OCI-LY7 (cell line): ENCODE measurements at regions of chr6 and their contacts with region 1.

Region 1: DNA sequence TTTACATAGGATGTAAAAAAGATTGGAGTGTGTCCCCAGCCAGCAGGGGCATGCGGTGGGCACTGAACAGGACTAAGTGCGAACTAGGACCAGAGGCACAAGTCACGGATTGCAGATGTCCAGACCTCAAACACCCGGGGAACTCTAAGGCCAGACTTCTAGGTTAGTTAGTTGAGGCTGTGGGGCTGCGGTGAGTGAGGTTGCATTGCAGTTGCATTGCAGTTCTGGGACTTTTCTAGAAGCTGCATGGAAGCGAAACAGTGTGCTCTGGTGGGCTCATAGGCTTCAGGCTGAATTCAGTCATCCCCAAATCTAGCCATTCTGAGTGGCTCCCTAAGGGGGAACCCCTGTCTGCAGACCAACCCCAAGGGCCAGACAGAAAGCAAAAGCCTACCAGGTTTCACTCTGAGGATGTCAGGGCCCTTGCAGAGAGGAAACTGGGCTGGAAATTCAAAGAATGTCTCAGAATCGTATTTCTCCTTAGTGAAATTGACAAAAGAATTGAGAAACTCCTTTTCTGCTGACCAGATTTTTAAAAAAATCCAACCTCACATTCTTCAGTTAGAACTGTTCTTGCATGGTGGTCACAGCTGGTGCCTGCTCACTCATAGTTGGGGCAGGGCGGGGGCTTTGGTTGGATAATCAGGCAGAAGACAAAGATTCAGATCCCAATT is 182.8 kb downstream of the ZDHHC14 start:
- DNase-seq: peak; percentile 41
- H3K4me3 ChIP-seq: no peak overlapping the region
- H3K27ac ChIP-seq: peak overlapping the region; percentile 37
- H3K4me1 ChIP-seq: peaks cover 84% of the 10 kb centered on the region
- CTCF ChIP-seq: no peak

Region 2: GRCh38 chr6:157221007-157221816 is 342.5 kb before region 1 on chr6:
- CTCF ChIA-PET with region 1: no interaction called
- POLR2A ChIA-PET with region 1: no interaction called
- intact Hi-C with region 1: loop called (anchors 10 kb)
- DNase-seq: peak; percentile 72
- H3K4me3 ChIP-seq: peak overlapping the region; percentile 63
- H3K27ac ChIP-seq: no peak overlapping the region
- H3K4me1 ChIP-seq: peaks cover 25% of the 10 kb centered on the region
- CTCF ChIP-seq: 0 out of 2 replicates have a peak, but pooled peaks have one; percentile 17

Region 3: GRCh38 chr6:157323255-157323965 is 240.3 kb before region 1 on chr6 and contains the start of gene TMEM242:
- CTCF ChIA-PET with region 1: no interaction called
- POLR2A ChIA-PET with region 1: no interaction called
- intact Hi-C with region 1: loop called (anchors 5 kb)
- DNase-seq: peak; percentile 91
- H3K4me3 ChIP-seq: peak within 1 kb of the TSS; percentile 77
- H3K27ac ChIP-seq: peak within 1 kb of the TSS; percentile 6
- H3K4me1 ChIP-seq: peaks cover 14% of the 10 kb centered on the region
- CTCF ChIP-seq: peak; percentile 27; the same call in 1 of the 2 replicates
- total RNA-seq, gene TMEM242: 4.5 and 8.2 TPM in 2 replicates

Region 4: DNA sequence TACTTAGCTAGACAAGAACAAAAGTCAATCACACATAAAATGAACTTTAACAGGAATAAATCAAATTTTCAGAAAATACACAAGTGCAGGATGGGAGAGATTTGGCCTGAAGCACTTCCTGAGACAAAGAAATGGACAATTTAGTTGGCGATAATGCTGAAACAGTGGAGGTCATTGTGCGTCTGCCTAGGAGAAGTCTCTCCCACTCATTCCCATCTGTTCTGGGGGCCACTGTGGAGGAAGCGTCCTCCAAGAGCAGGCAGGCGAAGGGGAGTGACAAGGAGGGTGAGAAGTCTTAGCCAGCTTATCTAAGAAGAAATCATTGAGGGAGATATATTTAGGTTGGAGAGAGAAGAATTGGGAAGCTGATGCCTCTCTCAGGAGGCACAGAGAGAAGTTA is 230.2 kb before region 1 on chr6:
- CTCF ChIA-PET with region 1: no interaction called
- POLR2A ChIA-PET with region 1: no interaction called
- intact Hi-C with region 1: no loop called
- DNase-seq: no peak
- H3K4me3 ChIP-seq: no peak overlapping the region
- H3K27ac ChIP-seq: no peak overlapping the region
- H3K4me1 ChIP-seq: no peaks in the 10 kb centered on the region
- CTCF ChIP-seq: no peak

Region 5: GRCh38 chr6:157443066-157443800 is 120.5 kb before region 1 on chr6:
- CTCF ChIA-PET with region 1: no interaction called
- POLR2A ChIA-PET with region 1: no interaction called
- intact Hi-C with region 1: no loop called
- DNase-seq: no peak
- H3K4me3 ChIP-seq: no peak overlapping the region
- H3K27ac ChIP-seq: no peak overlapping the region
- H3K4me1 ChIP-seq: no peaks in the 10 kb centered on the region
- CTCF ChIP-seq: no peak

Region 6: GRCh38 chr6:157597446-157598312 is 33.9 kb after region 1 on chr6:
- CTCF ChIA-PET with region 1: no interaction called
- POLR2A ChIA-PET with region 1: interaction called, 3 read pairs
- intact Hi-C with region 1: loop called (anchors 5 kb)
- DNase-seq: peak; percentile 71
- H3K4me3 ChIP-seq: no peak overlapping the region
- H3K27ac ChIP-seq: no peak overlapping the region
- H3K4me1 ChIP-seq: peaks cover 31% of the 10 kb centered on the region
- CTCF ChIP-seq: peak; percentile 79

Region 7: GRCh38 chr6:157667211-157668008 is 103.7 kb after region 1 on chr6:
- CTCF ChIA-PET with region 1: no interaction called
- POLR2A ChIA-PET with region 1: no interaction called
- intact Hi-C with region 1: loop called (anchors 1 kb)
- DNase-seq: peak; percentile 74
- H3K4me3 ChIP-seq: no peak overlapping the region
- H3K27ac ChIP-seq: no peak overlapping the region
- H3K4me1 ChIP-seq: no peaks in the 10 kb centered on the region
- CTCF ChIP-seq: peak; percentile 98

Region 8: GRCh38 chr6:157764178-157765033 is 200.7 kb after region 1 on chr6:
- CTCF ChIA-PET with region 1: no interaction called
- POLR2A ChIA-PET with region 1: no interaction called
- intact Hi-C with region 1: loop called (anchors 10 kb)
- DNase-seq: peak; percentile 84
- H3K4me3 ChIP-seq: peak overlapping the region; percentile 53
- H3K27ac ChIP-seq: peak overlapping the region; percentile 50
- H3K4me1 ChIP-seq: peaks cover 58% of the 10 kb centered on the region
- CTCF ChIP-seq: no peak